ENCODE measurements at regions of chr9 and their contacts with region 1.

Region 1: DNA sequence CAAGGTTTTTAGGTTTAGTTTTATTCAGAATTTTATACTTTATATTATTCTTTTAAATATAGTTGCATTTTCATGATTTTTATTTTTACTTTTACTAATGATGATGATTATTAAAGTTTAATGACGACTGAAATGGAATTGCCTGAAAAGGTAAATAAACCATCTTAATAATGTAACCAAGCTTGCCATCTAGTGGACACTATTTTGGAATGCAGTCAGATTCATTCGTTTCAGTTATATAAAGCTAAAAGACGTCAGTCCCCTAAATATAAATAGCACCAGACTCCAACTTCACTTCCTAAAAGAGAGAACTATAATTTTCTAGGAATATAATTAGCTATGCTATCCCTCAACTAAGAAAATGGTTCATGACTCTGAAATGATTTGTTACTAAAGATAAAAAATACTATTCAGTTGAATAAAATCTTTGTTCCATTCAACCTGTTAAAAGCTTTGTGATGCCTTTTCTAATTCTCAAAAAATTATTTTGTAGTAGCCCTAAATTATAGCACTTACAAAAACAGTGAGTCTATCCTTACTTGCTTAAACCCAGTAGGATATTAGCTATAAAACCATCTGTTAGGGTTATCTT is 19.9 kb downstream of the ABITRAM start:
- DNase-seq: peak; percentile 78
- H3K4me3 ChIP-seq: no peak overlapping the region
- H3K27ac ChIP-seq: no peak overlapping the region
- H3K4me1 ChIP-seq: peaks cover 20% of the 10 kb centered on the region
- H3K27me3 ChIP-seq: no peaks in the 10 kb centered on the region
- CTCF ChIP-seq: peak in 1 of 2 donors; percentile 34
- POLR2A ChIP-seq: no peak

Region 2: DNA sequence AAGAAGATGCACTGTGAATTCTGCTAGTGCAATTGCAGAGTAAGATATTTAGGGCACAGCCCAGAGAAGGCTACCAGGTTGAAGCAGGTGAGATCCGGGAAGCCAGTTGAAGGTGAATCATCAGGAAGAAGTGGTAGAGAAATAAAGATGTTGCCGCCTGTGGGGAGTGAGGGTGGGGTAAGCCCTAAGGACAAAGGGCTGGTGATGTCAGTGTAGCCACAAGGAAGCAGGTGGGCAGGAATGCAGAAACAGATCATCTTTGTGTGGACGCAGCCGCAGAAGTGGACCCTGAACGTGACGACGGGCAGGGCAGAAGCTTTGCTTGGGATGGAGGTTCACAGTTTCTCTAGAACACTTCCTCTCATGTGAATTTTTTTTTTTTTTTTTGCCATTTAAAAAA is 262.5 kb before region 1 on chr9:
- CTCF ChIA-PET with region 1: no interaction called
- POLR2A ChIA-PET with region 1: no interaction called
- dilution Hi-C with region 1: no loop called
- intact Hi-C with region 1: no loop called
- DNase-seq: no peak
- H3K4me3 ChIP-seq: no peak overlapping the region
- H3K27ac ChIP-seq: no peak overlapping the region
- H3K4me1 ChIP-seq: no peaks in the 10 kb centered on the region
- H3K27me3 ChIP-seq: no peaks in the 10 kb centered on the region
- CTCF ChIP-seq: no peak
- POLR2A ChIP-seq: no peak

Region 3: GRCh38 chr9:108850293-108850897 is 103.7 kb before region 1 on chr9:
- CTCF ChIA-PET with region 1: interaction called, 9 read pairs
- POLR2A ChIA-PET with region 1: no interaction called
- dilution Hi-C with region 1: no loop called
- intact Hi-C with region 1: loop called (anchors 2 kb)
- DNase-seq: peak; percentile 34
- H3K4me3 ChIP-seq: no peak overlapping the region
- H3K27ac ChIP-seq: no peak overlapping the region
- H3K4me1 ChIP-seq: no peaks in the 10 kb centered on the region
- H3K27me3 ChIP-seq: peaks cover 0 to 2% of the 10 kb centered on the region in 2 experiments
- CTCF ChIP-seq: peak in 1 of 2 donors; percentile 28
- POLR2A ChIP-seq: no peak

Region 4: GRCh38 chr9:108876425-108876824 is 77.7 kb before region 1 on chr9:
- CTCF ChIA-PET with region 1: interaction called, 15 read pairs
- POLR2A ChIA-PET with region 1: no interaction called
- dilution Hi-C with region 1: no loop called
- intact Hi-C with region 1: no loop called
- DNase-seq: no peak
- H3K4me3 ChIP-seq: no peak overlapping the region
- H3K27ac ChIP-seq: no peak overlapping the region
- H3K4me1 ChIP-seq: no peaks in the 10 kb centered on the region
- H3K27me3 ChIP-seq: no peaks in the 10 kb centered on the region
- CTCF ChIP-seq: no peak
- POLR2A ChIP-seq: no peak

Region 5: DNA sequence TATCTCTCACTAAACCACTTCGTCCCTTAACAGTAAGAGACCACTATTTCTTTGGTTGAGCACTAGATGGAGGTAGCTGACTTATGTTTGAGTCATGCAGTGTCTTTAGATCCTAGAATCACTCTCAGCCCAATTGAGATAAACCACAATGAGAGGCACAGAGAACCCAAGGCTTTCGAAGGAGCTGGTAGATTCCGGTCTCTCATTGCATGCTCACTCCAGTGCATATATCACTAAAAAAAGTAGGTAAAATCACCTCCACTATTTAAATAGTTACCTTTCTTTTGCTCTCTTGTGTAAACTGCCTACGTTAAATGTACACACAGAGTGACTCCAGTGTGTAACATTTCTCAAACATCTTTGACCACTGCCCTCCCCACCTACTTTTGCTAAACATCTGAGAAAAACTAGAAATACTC is 64.4 kb before region 1 on chr9:
- CTCF ChIA-PET with region 1: interaction called, 11 read pairs
- POLR2A ChIA-PET with region 1: no interaction called
- dilution Hi-C with region 1: no loop called
- intact Hi-C with region 1: loop called (anchors 2 kb)
- DNase-seq: peak; percentile 32
- H3K4me3 ChIP-seq: no peak overlapping the region
- H3K27ac ChIP-seq: no peak overlapping the region
- H3K4me1 ChIP-seq: peaks cover 3% of the 10 kb centered on the region
- H3K27me3 ChIP-seq: no peaks in the 10 kb centered on the region
- CTCF ChIP-seq: peak in 1 of 2 donors; percentile 21
- POLR2A ChIP-seq: no peak

Region 6: DNA sequence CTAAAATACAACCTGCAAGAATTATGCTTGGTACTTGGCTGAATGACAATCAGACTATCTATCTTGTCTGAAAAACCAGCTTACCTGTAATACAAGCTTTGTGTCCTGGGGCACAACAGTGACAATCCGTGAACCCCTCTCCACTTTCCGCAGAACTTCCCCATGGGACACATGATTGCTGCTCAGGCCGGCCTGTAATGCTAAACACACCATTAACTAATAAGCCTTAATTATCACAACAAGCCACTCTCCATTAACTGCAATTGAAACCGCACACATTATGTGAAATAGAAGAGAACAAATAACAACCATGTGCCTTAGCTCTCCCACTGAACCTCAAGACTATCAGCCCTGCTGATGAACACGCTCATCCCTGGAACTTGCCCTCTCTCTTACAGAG is 53.9 kb before region 1 on chr9:
- CTCF ChIA-PET with region 1: interaction called, 11 read pairs
- POLR2A ChIA-PET with region 1: no interaction called
- dilution Hi-C with region 1: no loop called
- intact Hi-C with region 1: no loop called
- DNase-seq: no peak
- H3K4me3 ChIP-seq: no peak overlapping the region
- H3K27ac ChIP-seq: no peak overlapping the region
- H3K4me1 ChIP-seq: no peaks in the 10 kb centered on the region
- H3K27me3 ChIP-seq: no peaks in the 10 kb centered on the region
- CTCF ChIP-seq: no peak
- POLR2A ChIP-seq: no peak

Region 7: DNA sequence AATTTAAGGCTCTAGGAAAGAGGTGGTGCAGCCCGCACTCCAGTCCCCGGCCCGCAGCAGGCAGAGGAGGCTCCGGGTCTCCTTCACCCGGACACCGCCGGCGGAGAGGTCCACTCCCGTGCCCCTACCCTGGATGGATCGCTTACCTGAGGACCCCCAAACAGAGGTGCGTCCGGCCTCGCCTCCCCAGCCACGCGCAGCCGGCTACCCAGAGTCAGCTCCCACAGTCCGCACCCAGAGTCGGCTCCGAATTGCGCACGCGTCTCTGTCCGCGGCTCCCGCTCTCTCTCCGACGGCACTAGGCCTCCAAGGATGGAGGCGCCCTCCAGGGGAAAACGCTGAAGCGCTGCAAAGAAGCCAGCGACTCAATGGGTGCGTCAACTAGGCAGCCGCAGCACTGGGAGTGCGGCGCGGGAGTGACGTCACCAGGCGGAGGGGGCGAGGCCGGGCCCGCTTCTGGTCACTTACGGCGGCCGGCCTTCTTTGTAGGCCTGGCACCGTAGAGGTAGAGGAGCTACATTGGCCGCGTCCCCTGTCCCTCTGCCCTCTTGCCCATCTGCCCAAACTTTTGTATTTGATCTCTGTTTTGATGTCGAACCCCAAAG is 20.3 kb before region 1 on chr9 and contains the start of gene ELP1:
- CTCF ChIA-PET with region 1: interaction called, 9 read pairs
- POLR2A ChIA-PET with region 1: no interaction called
- dilution Hi-C with region 1: no loop called
- intact Hi-C with region 1: loop called (anchors 1 kb)
- DNase-seq: peak; percentile 94
- H3K4me3 ChIP-seq: peak within 1 kb of the TSS; percentile 11 to 74 (median 66)
- H3K27ac ChIP-seq: peak within 1 kb of the TSS; percentile 47
- H3K4me1 ChIP-seq: peaks cover 10% of the 10 kb centered on the region
- H3K27me3 ChIP-seq: no peaks in the 10 kb centered on the region
- CTCF ChIP-seq: peak; percentile 12 to 46
- POLR2A ChIP-seq: no peak
- total RNA-seq, gene ELP1: 21.4 and 21.8 TPM in 2 replicates